Esophagus squamous epithelium (tissue), 5 donors: ENCODE measurements at regions of chr14 and their contacts with region 1.

Region 1: DNA sequence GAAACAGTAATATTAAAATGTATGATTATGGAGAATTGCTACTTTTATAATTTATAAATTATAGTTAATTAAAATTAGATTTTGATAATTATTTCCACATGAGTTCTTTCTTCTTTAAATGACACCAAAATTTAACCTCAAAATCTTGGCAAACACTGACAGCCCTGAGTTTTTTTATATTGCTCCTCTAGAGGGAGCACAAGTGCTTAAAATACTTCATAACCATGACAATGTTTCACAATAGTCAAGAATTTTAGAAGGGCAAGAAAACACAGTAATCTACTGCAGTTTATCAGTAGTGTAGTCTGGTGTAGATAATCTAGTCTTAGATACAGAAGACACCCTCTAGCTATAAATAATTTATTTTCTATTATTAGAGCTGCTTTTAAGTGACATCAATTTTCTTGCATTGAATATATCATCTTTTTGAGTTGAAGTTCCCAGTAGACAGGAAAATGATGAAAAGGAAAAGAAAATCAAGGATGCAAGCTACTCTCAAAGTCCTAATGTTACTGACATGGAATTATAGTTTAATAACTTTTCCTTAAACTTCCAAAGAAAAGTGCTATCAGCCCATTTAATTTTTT is 14.3 kb upstream of the PTGER2 start:
- DNase-seq: no peak
- H3K4me3 ChIP-seq: no peak overlapping the region
- H3K27ac ChIP-seq: no peak overlapping the region
- H3K4me1 ChIP-seq: no peaks in the 10 kb centered on the region
- H3K27me3 ChIP-seq: peaks cover 0 to 3% (median 0%) of the 10 kb centered on the region in 4 donors
- CTCF ChIP-seq: peak in 5 of 6 experiments; percentile 48 to 71 (median 69)
- POLR2A ChIP-seq: no peak

Region 2: DNA sequence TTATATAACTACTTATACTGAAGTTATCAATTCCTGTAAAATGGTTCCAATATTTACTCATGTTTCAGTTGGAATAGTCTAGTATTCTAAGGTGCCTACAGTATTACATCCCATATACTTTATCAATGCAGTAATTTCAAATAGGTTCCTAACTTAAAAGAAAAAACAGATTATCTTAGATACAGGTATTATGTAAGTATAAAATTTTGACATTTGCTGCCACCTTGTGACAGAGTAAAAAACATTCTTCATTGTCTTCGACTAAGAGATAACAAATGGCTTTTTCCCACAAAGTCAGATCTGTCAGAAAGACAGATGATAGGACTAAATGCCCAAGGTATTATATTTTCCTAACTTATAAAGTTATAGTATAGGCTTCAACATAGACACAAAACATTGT is 173.8 kb after region 1 on chr14:
- intact Hi-C with region 1: loop called (anchors 5 kb)
- DNase-seq: no peak
- H3K4me3 ChIP-seq: no peak overlapping the region
- H3K27ac ChIP-seq: no peak overlapping the region
- H3K4me1 ChIP-seq: no peaks in the 10 kb centered on the region
- H3K27me3 ChIP-seq: no peaks in the 10 kb centered on the region
- CTCF ChIP-seq: peak in 4 of 6 experiments; percentile 4 to 53 (median 26)
- POLR2A ChIP-seq: no peak